Gastrocnemius medialis (tissue), 4 donors: ENCODE measurements at regions of chr20 and their contacts with region 1.

Region 1: DNA sequence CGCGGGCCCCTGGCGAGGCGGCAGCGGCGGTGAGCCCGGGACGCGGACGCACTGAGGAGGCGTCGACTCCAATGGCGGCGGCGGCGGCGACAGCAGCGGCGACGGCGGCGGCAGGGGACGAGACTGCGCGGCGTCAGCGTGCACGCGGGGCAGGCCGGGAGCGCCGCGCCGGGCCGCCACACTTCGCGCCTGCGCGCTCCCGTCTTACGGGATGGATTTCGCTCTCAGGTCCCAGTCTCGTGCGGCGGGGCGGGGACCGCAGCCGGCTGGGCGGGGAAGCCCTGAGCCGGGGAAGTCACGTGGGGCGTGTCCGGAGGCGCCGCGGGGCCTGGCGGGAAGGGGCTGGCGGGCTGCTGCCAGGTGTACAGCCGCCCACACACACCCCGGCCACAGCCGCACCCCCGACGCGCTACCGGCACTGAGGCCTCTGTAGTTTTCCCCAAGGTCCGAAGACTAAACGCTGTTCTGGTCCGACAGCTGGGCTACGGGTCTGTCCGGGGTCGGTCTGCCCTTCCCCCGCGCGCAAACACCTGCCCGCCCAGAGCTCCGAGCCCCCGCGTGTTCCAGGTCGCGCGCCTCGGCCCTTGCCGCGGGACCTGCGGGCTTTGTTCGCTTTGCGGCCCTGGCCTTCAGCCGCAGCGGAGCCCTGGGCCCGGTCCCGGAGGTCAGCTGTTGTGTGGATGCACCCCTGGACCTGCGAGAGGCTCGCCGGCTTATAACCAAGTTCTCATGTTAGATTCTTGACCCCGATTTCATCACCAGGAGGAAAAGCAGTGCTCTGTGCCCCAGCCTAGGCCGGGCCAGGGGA is at the start of gene YTHDF1:
- DNase-seq: peak; percentile 93 to 96
- ATAC-seq: peak; percentile 94 to 97
- H3K4me3 ChIP-seq: peak within 1 kb of the TSS; percentile 77 to 95 (median 86)
- H3K27ac ChIP-seq: peak within 1 kb of the TSS; percentile 85 to 96 (median 92)
- H3K4me1 ChIP-seq: peaks cover 35 to 38% of the 10 kb centered on the region in 2 donors
- H3K27me3 ChIP-seq: no peaks in the 10 kb centered on the region
- CTCF ChIP-seq: no peak
- POLR2A ChIP-seq: peak; percentile 75 to 88
- total RNA-seq, gene YTHDF1: 37.1 to 45.7 (median 40.4) TPM

Region 2: DNA sequence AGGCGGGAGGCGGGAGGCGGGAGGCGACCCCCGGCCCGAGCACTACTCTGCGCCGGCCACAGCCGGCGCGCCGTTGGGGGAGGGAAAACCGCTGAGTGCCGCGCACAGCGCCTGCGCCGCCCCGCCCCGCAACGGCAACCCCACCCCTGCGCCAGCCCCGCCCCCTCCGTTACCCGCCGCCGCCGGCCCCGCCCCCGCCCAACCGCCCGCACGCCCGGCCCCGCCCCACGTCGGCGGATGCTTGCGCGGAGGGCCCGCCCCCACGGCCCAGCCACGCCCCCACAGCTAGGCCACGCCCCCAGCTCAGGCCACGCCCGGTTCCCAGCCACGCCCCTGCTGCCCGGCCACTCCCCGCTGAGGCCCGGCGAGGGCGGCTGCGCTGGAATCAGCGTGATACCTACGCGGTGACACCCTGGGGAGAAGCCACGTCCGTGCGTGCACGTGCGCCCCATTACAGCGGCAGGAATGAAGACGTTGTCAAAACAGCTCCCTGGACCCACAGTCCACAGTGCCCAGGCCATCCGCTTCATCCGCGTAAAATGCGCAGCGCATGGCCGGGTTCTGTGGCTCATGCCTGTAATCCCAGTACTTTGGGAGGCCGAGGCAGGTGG is 354.4 kb before region 1 on chr20 and contains the start of gene TCFL5:
- in situ Hi-C with region 1: no loop called
- intact Hi-C with region 1: loop called (anchors 5 kb)
- DNase-seq: peak; percentile 82 to 84
- ATAC-seq: peak; percentile 89 to 90
- H3K4me3 ChIP-seq: peak within 1 kb of the TSS; percentile 40 to 52 (median 46)
- H3K27ac ChIP-seq: peak within 1 kb of the TSS; percentile 25 to 65 (median 44)
- H3K4me1 ChIP-seq: peaks cover 9% of the 10 kb centered on the region in 2 donors
- H3K27me3 ChIP-seq: no peaks in the 10 kb centered on the region
- CTCF ChIP-seq: no peak
- POLR2A ChIP-seq: no peak
- total RNA-seq, gene TCFL5: 5.3 to 7.3 (median 6.3) TPM

Region 3: DNA sequence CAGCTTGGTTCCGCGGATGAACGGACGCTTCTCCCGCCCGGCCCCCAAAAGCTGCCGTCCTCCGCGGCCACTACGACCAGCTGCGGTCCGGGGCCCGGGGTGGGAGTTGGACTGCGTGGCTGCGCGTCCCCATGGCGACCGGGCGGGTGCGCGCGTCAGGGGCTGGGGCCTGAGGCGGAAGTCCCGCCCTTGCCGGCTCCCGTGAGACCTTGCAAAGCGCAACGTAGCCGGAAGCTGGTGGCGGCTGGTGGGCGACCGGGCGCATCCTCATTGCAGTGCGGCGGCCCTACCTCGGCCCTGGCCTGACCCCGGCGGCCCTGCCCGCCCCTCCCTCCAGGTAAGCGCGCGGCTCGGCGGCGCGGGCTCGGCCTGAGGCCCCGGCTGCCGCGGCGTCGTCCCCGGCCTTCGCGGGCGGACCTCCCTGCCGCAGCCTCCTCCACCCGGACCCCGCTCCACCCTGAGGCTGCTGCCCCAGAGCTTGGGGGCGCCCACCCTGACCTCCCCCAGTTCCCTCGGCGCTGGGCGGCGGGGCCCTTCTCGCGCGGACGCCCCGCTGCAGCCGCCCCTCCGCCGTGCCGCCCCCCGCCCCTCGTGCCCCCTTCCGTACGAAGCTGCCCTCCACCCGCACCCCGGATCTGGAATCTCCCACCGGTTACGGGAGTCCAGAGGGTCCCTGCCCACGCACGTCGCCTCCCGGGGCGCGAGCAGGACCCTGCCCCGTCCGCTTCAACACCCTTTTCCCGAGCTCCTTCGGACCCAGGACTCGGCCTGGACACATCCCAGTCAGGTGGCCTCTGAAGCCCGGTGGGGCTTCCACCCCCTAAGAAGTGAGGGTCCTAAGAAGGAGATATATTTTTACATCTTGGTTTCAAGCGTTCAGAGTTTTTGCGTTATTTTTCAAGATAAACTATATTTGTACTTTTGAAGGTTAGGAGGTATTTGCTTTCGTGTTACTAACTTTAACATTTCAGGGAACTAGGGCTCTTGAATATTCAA is 56.6 kb after region 1 on chr20 and contains the start of gene ARFGAP1:
- in situ Hi-C with region 1: no loop called
- intact Hi-C with region 1: loop called (anchors 2 kb)
- DNase-seq: peak; percentile 76 to 80
- ATAC-seq: peak; percentile 86 to 96
- H3K4me3 ChIP-seq: peak within 1 kb of the TSS; percentile 84 to 99 (median 93)
- H3K27ac ChIP-seq: peak within 1 kb of the TSS; percentile 50 to 67 (median 63)
- H3K4me1 ChIP-seq: peaks cover 19 to 24% of the 10 kb centered on the region in 2 donors
- H3K27me3 ChIP-seq: peaks cover 7 to 16% (median 16%) of the 10 kb centered on the region in 3 donors
- CTCF ChIP-seq: no peak
- POLR2A ChIP-seq: peak; percentile 57 to 77
- total RNA-seq, gene ARFGAP1: 15.2 to 24.4 (median 18.0) TPM

Region 4: GRCh38 chr20:63344616-63345327 is 128.5 kb after region 1 on chr20:
- in situ Hi-C with region 1: no loop called
- intact Hi-C with region 1: no loop called
- DNase-seq: no peak
- ATAC-seq: no peak
- H3K4me3 ChIP-seq: no peak overlapping the region
- H3K27ac ChIP-seq: no peak overlapping the region
- H3K4me1 ChIP-seq: no peaks in the 10 kb centered on the region
- H3K27me3 ChIP-seq: peaks cover 33 to 48% (median 47%) of the 10 kb centered on the region in 3 donors
- CTCF ChIP-seq: no peak
- POLR2A ChIP-seq: no peak